ENCODE measurements at regions of chr4 and their contacts with region 1.

Region 1: GRCh38 chr4:22607382-22607781 is 85.4 kb upstream of the GBA3 start:
- DNase-seq: no peak
- ATAC-seq: peak; percentile 93
- H3K4me3 ChIP-seq: no peak overlapping the region
- H3K27ac ChIP-seq: no peak overlapping the region
- H3K4me1 ChIP-seq: no peaks in the 10 kb centered on the region
- H3K27me3 ChIP-seq: no peaks in the 10 kb centered on the region
- CTCF ChIP-seq: peak; percentile 15 to 61 (median 56); a peak in 5 of 6 replicates
- EP300 ChIP-seq: no peak
- POLR2A ChIP-seq: no peak
- RAD21 ChIP-seq: peak; percentile 30; the same call in 1 of the 2 replicates

Region 2: DNA sequence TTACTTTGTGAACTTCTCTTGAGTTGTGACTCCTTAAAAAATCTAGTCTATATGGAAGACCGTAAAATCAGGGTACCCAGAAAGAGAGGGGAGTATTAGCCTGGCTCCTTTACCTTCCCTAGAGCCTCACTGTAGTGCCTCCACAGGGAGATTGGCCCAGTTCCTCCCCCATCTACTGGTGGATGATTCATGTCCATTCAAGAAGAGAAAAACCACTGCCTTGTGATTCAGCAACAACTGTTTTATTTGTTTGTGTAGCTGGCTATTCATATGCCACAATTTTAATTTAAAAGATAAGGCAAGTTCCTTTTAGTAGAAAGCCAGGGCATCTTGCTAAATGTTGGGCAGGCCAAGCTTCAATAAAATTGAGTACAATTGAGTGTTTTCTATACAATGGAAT is 437.0 kb before region 1 on chr4:
- CTCF ChIA-PET with region 1: no interaction called
- POLR2A ChIA-PET with region 1: no interaction called
- RAD21 ChIA-PET with region 1: no interaction called
- SMC1A ChIA-PET with region 1: no interaction called
- in situ Hi-C with region 1: no loop called
- intact Hi-C with region 1: no loop called
- DNase-seq: no peak
- ATAC-seq: no peak
- H3K4me3 ChIP-seq: no peak overlapping the region
- H3K27ac ChIP-seq: no peak overlapping the region
- H3K4me1 ChIP-seq: no peaks in the 10 kb centered on the region
- H3K27me3 ChIP-seq: no peaks in the 10 kb centered on the region
- CTCF ChIP-seq: no peak
- EP300 ChIP-seq: no peak
- POLR2A ChIP-seq: no peak
- RAD21 ChIP-seq: no peak

Region 3: GRCh38 chr4:22416403-22416802 is 191.0 kb before region 1 on chr4:
- CTCF ChIA-PET with region 1: interaction called, 117 read pairs
- POLR2A ChIA-PET with region 1: no interaction called
- RAD21 ChIA-PET with region 1: interaction called, 66 read pairs
- SMC1A ChIA-PET with region 1: interaction called, 101 read pairs
- in situ Hi-C with region 1: no loop called
- intact Hi-C with region 1: no loop called
- DNase-seq: no peak
- ATAC-seq: no peak; the same call in 2 of the 3 replicates
- H3K4me3 ChIP-seq: no peak overlapping the region
- H3K27ac ChIP-seq: no peak overlapping the region
- H3K4me1 ChIP-seq: no peaks in the 10 kb centered on the region
- H3K27me3 ChIP-seq: no peaks in the 10 kb centered on the region
- CTCF ChIP-seq: no peak
- EP300 ChIP-seq: no peak
- POLR2A ChIP-seq: no peak
- RAD21 ChIP-seq: no peak

Region 4: DNA sequence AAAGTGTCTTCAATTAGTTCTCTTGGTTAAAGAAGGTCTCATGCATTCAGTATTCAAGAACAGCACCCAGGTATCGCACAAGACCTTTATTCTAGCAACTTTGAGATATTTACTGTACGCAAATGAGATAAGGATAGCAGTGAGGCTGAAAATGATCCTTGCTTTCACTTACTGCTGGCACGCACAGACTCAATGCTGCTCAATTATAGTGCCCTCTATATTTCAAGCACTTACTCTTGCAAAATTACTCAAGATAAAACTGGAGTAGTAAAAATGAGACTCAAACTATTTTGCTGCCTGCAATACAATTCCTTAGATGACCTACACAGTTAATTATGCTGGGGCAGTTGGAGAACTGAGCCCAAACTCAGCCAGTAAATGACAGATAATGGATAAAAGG is 152.4 kb before region 1 on chr4:
- CTCF ChIA-PET with region 1: interaction called, 9 read pairs
- POLR2A ChIA-PET with region 1: no interaction called
- RAD21 ChIA-PET with region 1: interaction called, 12 read pairs
- SMC1A ChIA-PET with region 1: interaction called, 10 read pairs
- in situ Hi-C with region 1: no loop called
- intact Hi-C with region 1: no loop called
- DNase-seq: no peak
- ATAC-seq: peak; percentile 85
- H3K4me3 ChIP-seq: no peak overlapping the region
- H3K27ac ChIP-seq: no peak overlapping the region
- H3K4me1 ChIP-seq: no peaks in the 10 kb centered on the region
- H3K27me3 ChIP-seq: no peaks in the 10 kb centered on the region
- CTCF ChIP-seq: no peak
- EP300 ChIP-seq: no peak; a peak in 1 of 4 replicates
- POLR2A ChIP-seq: no peak
- RAD21 ChIP-seq: no peak

Region 5: DNA sequence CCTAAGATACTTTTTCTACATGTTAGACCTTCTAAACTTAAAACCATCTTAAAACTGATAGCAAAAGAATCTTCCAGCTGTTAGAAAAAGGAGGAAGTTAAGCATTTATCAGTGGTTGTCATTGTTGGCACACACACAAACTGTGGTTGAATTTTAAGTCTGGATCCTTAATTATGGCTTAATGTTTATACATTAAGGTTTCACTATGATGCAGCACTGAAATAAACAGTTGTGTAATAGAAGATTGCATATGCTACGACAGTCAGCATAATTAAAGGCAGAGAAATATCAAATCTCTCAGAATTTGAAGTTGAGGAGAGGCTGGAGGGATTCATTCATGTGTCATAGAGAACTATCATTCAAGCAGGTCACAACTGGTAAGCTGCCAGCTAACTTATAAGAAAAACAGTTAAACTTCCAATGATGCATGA is 123.8 kb before region 1 on chr4:
- CTCF ChIA-PET with region 1: interaction called, 11 read pairs
- POLR2A ChIA-PET with region 1: no interaction called
- RAD21 ChIA-PET with region 1: interaction called, 18 read pairs
- SMC1A ChIA-PET with region 1: interaction called, 24 read pairs
- in situ Hi-C with region 1: no loop called
- intact Hi-C with region 1: no loop called
- DNase-seq: peak; percentile 38
- ATAC-seq: peak; percentile 48
- H3K4me3 ChIP-seq: no peak overlapping the region
- H3K27ac ChIP-seq: no peak overlapping the region
- H3K4me1 ChIP-seq: no peaks in the 10 kb centered on the region
- H3K27me3 ChIP-seq: no peaks in the 10 kb centered on the region
- CTCF ChIP-seq: no peak
- EP300 ChIP-seq: peak; percentile 62 to 78
- POLR2A ChIP-seq: no peak
- RAD21 ChIP-seq: no peak

Region 6: GRCh38 chr4:22515145-22515887 is 92.1 kb before region 1 on chr4:
- CTCF ChIA-PET with region 1: interaction called, 6 read pairs
- POLR2A ChIA-PET with region 1: interaction called, 6 read pairs
- RAD21 ChIA-PET with region 1: interaction called, 8 read pairs
- SMC1A ChIA-PET with region 1: interaction called, 11 read pairs
- in situ Hi-C with region 1: no loop called
- intact Hi-C with region 1: no loop called
- DNase-seq: no peak
- ATAC-seq: peak; percentile 42
- H3K4me3 ChIP-seq: no peak overlapping the region
- H3K27ac ChIP-seq: no peak overlapping the region
- H3K4me1 ChIP-seq: no peaks in the 10 kb centered on the region
- H3K27me3 ChIP-seq: peaks cover 0 to 3% of the 10 kb centered on the region in 2 experiments; a peak in 1 of 4 replicates
- CTCF ChIP-seq: no peak; a peak in 1 of 6 replicates
- EP300 ChIP-seq: no peak
- POLR2A ChIP-seq: no peak
- RAD21 ChIP-seq: no peak

Region 7: DNA sequence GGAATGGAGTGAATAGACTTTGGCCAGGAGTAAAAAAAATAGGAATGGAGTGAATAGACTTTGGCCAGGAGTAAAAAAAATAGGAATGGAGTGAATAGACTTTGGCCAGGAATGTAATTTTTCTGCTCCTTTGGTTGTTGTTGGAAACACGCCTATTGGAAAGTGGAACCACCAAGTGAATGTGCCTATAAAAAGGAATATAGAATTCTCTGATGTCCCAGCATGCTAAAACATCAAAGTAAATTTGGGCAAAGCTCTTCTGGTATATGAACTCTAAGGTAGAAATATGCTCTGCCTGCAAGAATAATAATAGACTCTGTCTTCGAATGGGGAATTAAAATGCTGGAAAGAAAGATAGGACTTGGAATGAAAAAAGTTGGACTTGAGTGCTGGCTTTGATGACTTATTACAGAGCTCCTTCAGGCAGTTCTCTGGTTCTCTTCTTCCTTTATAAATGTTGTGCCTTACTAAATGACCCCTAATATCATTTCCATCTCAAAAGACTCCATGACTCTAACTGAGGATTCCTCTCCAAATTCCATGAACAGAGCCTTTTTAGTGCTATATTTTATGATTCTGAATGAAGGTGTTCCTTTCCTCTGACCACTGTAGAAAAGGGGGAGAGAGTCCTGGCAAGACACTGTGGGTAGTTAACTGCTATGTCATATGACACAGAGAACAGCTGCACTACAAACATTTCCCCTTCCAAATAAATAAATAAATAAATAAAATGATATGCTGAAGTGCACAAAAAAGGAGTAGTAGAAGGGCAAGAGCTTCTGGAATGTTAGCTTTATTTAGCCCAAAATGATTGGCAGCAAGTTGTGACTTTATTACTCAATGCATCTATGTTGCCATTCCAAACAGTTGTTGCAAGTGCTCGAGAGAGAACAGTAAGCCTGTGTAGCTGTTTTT is 71.8 kb after region 1 on chr4:
- CTCF ChIA-PET with region 1: interaction called, 10 read pairs
- POLR2A ChIA-PET with region 1: interaction called, 3 read pairs
- RAD21 ChIA-PET with region 1: interaction called, 9 read pairs
- SMC1A ChIA-PET with region 1: interaction called, 7 read pairs
- in situ Hi-C with region 1: no loop called
- intact Hi-C with region 1: no loop called
- DNase-seq: no peak
- ATAC-seq: no peak
- H3K4me3 ChIP-seq: no peak overlapping the region
- H3K27ac ChIP-seq: no peak overlapping the region
- H3K4me1 ChIP-seq: no peaks in the 10 kb centered on the region
- H3K27me3 ChIP-seq: no peaks in the 10 kb centered on the region
- CTCF ChIP-seq: no peak
- EP300 ChIP-seq: no peak
- POLR2A ChIP-seq: no peak
- RAD21 ChIP-seq: no peak

Measured in GM12878 (cell line).